ENCODE measurements at regions of chr7 and their contacts with region 1.

Region 1: DNA sequence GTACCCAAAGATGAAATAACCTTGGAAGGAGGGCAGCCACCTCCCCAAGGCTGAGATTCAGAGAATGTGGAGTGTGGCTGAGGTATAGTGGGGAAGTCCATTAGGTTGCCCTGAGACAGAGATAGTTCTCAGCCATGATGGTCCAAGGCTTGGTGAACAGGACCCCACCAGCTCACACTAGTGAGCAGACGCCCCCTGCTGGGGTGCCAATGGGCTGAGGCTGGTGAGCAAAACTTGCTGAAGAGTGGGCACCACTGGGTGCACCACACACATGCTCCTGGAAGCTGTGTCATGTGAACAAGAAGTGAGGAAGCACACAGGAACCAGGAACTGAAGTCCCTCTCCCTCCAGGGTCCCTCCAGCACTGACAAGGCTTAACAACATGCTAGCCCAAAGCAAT is 8.9 kb downstream of the FBXL13 start:
- DNase-seq: peak; percentile 56
- ATAC-seq: peak; percentile 61
- H3K4me3 ChIP-seq: no peak overlapping the region
- H3K4me3 Mint-ChIP-seq: no peak overlapping the region
- H3K27ac ChIP-seq: no peak overlapping the region
- H3K27ac Mint-ChIP-seq: no peak overlapping the region
- H3K4me1 ChIP-seq: no peaks in the 10 kb centered on the region
- H3K4me1 Mint-ChIP-seq: no peaks in the 10 kb centered on the region
- H3K27me3 ChIP-seq: no peaks in the 10 kb centered on the region
- H3K27me3 Mint-ChIP-seq: no peaks in the 10 kb centered on the region
- CTCF ChIP-seq: peak; percentile 60

Region 2: GRCh38 chr7:102967798-102968197 is 97.9 kb before region 1 on chr7:
- CTCF ChIA-PET with region 1: no interaction called
- POLR2A ChIA-PET with region 1: no interaction called
- intact Hi-C with region 1: no loop called
- DNase-seq: no peak
- ATAC-seq: no peak
- H3K4me3 ChIP-seq: no peak overlapping the region
- H3K4me3 Mint-ChIP-seq: no peak overlapping the region
- H3K27ac ChIP-seq: no peak overlapping the region
- H3K27ac Mint-ChIP-seq: no peak overlapping the region
- H3K4me1 ChIP-seq: no peaks in the 10 kb centered on the region
- H3K4me1 Mint-ChIP-seq: no peaks in the 10 kb centered on the region
- H3K27me3 ChIP-seq: no peaks in the 10 kb centered on the region
- H3K27me3 Mint-ChIP-seq: no peaks in the 10 kb centered on the region
- CTCF ChIP-seq: no peak

Region 3: DNA sequence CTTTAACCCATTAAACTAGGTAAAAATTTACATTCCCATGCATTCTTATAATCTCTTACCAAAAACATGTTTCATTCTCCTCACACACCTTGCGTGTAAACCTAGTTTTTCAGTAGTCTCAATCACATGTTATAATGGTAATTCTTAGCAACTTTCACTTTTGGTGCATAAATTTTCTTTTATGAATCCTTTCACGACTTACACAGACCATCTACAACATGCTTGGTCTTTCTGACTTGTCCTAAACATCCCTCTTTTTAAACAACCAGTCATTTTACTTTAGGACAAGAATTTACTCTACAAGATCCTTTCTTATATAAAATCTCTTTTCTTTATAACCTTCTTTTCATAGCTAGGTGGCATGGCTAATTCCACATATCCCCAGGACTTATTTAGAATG is 16.8 kb before region 1 on chr7:
- CTCF ChIA-PET with region 1: interaction called, 11 read pairs
- POLR2A ChIA-PET with region 1: no interaction called
- intact Hi-C with region 1: no loop called
- DNase-seq: no peak
- ATAC-seq: no peak
- H3K4me3 ChIP-seq: no peak overlapping the region
- H3K4me3 Mint-ChIP-seq: no peak overlapping the region
- H3K27ac ChIP-seq: no peak overlapping the region
- H3K27ac Mint-ChIP-seq: no peak overlapping the region
- H3K4me1 ChIP-seq: no peaks in the 10 kb centered on the region
- H3K4me1 Mint-ChIP-seq: no peaks in the 10 kb centered on the region
- H3K27me3 ChIP-seq: no peaks in the 10 kb centered on the region
- H3K27me3 Mint-ChIP-seq: no peaks in the 10 kb centered on the region
- CTCF ChIP-seq: no peak

Region 4: GRCh38 chr7:103307503-103308231 is 242.0 kb after region 1 on chr7:
- CTCF ChIA-PET with region 1: no interaction called
- POLR2A ChIA-PET with region 1: no interaction called
- intact Hi-C with region 1: no loop called
- DNase-seq: no peak
- ATAC-seq: no peak
- H3K4me3 ChIP-seq: no peak overlapping the region
- H3K4me3 Mint-ChIP-seq: no peak overlapping the region
- H3K27ac ChIP-seq: peak overlapping the region in 1 of 2 donors; percentile 9
- H3K27ac Mint-ChIP-seq: no peak overlapping the region
- H3K4me1 ChIP-seq: no peaks in the 10 kb centered on the region
- H3K4me1 Mint-ChIP-seq: peaks cover 4% of the 10 kb centered on the region
- H3K27me3 ChIP-seq: no peaks in the 10 kb centered on the region
- H3K27me3 Mint-ChIP-seq: no peaks in the 10 kb centered on the region
- CTCF ChIP-seq: no peak